CD14-positive monocyte (primary cell): ENCODE measurements at regions of chr3 and their contacts with region 1.

Region 1: DNA sequence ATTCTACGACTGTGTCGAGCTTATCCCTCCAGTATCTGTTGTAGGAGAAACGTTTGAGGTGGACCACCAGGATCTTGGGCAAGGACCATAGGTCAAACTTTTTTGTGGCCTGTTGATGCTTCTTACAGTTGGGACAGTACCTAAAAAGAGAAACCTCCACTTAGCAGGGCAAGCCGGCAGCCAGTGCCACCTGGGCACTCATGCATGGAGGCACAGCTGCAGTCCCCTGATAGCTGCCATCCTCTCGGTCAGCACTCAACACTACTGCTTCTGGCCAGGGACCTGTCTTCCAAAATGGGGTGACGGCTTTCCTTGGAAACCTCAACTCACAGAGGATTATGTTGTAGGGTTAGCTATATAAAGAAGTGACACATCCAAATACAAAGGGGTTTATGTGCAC is 7.0 kb upstream of the C3orf62 start:
- DNase-seq: no peak
- H3K4me3 ChIP-seq: no peak overlapping the region
- H3K4me3 Mint-ChIP-seq: no peak overlapping the region
- H3K27ac ChIP-seq: no peak overlapping the region
- H3K27ac Mint-ChIP-seq: no peak overlapping the region
- H3K4me1 ChIP-seq: peaks cover 6% of the 10 kb centered on the region in 2 donors
- H3K4me1 Mint-ChIP-seq: peaks cover 5% of the 10 kb centered on the region
- H3K27me3 ChIP-seq: no peaks in the 10 kb centered on the region
- H3K27me3 Mint-ChIP-seq: no peaks in the 10 kb centered on the region
- CTCF ChIP-seq: no peak

Region 2: GRCh38 chr3:49269443-49270155 is 14.4 kb before region 1 on chr3:
- intact Hi-C with region 1: loop called in 1 of 2 experiments (anchors 1 kb)
- DNase-seq: no peak
- H3K4me3 ChIP-seq: no peak overlapping the region
- H3K4me3 Mint-ChIP-seq: no peak overlapping the region
- H3K27ac ChIP-seq: peak overlapping the region in 1 of 2 donors; percentile 1
- H3K27ac Mint-ChIP-seq: peak overlapping the region in 4 of 7 donors; percentile 7 to 71 (median 52)
- H3K4me1 ChIP-seq: peaks cover 0 to 8% of the 10 kb centered on the region in 2 donors
- H3K4me1 Mint-ChIP-seq: peaks cover 5% of the 10 kb centered on the region
- H3K27me3 ChIP-seq: no peaks in the 10 kb centered on the region
- H3K27me3 Mint-ChIP-seq: peaks cover 0 to 2% (median 0%) of the 10 kb centered on the region in 3 donors
- CTCF ChIP-seq: no peak